Gastrocnemius medialis (tissue), 4 donors: ENCODE measurements at regions of chr5 and their contacts with region 1.

Region 1: DNA sequence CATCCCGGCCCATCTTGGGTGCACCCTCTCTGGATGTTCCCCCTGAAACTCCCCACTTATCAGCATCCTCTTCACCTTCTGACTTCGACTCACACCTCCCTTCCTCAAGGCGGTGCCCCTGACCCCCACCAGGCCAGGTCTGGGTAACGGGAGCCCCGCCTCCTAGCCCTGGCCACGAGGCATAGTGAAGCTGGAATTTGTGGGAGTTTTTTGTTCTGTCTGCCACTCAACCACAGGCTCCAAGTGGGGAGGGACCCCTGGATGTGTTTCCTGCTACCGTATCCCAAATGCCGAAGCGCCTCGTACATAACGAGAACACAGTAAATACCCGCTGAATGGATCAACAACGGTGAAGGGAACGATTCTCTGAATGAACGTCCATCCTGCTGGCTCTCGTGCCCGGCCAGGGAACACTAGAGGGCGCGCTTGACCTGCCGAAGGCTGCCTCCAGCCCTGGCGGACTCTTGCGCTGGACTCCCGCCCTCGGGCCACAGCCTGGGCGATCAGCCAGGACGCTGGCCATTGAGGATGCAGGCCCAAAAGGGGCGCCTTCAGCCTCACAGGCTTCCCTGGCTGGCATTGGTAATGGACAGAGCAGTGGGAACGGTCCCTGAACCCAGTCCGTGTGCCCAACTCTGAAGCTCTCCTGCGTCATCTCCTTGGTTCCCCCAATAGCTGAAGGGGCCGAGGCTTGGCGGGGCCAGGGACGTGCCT is 47.3 kb upstream of the PHYKPL start:
- DNase-seq: peak; percentile 65 to 74
- ATAC-seq: peak; percentile 78 to 91
- H3K4me3 ChIP-seq: no peak overlapping the region
- H3K27ac ChIP-seq: no peak overlapping the region
- H3K4me1 ChIP-seq: no peaks in the 10 kb centered on the region
- H3K27me3 ChIP-seq: no peaks in the 10 kb centered on the region
- CTCF ChIP-seq: peak; percentile 78 to 93 (median 91)
- POLR2A ChIP-seq: no peak

Region 2: GRCh38 chr5:178416919-178417318 is 137.0 kb after region 1 on chr5:
- in situ Hi-C with region 1: no loop called
- intact Hi-C with region 1: no loop called
- DNase-seq: no peak
- ATAC-seq: no peak
- H3K4me3 ChIP-seq: no peak overlapping the region
- H3K27ac ChIP-seq: no peak overlapping the region
- H3K4me1 ChIP-seq: no peaks in the 10 kb centered on the region
- H3K27me3 ChIP-seq: no peaks in the 10 kb centered on the region
- CTCF ChIP-seq: no peak
- POLR2A ChIP-seq: no peak

Region 3: DNA sequence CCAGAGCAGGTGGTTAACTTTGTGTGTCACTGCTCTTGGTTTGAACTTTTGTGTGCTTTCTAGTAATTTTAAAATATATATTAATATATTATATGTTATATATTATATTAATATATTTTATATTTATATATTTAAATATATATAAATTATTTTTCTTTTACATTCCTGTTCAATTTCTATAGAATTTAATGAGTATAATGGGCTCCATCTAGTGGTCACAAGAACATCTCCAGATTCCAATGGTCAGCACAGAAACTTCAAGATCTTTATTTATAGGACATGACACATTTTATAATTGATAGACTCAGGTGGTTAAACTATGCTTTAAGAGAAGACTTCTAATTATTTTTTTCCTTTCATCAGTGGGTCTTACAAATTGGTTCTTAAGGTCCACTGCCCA is 271.2 kb after region 1 on chr5:
- in situ Hi-C with region 1: loop called in 3 of 4 experiments (anchors 5 to 10 kb)
- intact Hi-C with region 1: loop called (anchors 1 kb)
- DNase-seq: no peak
- ATAC-seq: peak; percentile 72 to 83
- H3K4me3 ChIP-seq: no peak overlapping the region
- H3K27ac ChIP-seq: no peak overlapping the region
- H3K4me1 ChIP-seq: peaks cover 6 to 14% of the 10 kb centered on the region in 2 donors
- H3K27me3 ChIP-seq: no peaks in the 10 kb centered on the region
- CTCF ChIP-seq: peak in 3 of 5 experiments; percentile 29 to 64 (median 52)
- POLR2A ChIP-seq: no peak

Region 4: DNA sequence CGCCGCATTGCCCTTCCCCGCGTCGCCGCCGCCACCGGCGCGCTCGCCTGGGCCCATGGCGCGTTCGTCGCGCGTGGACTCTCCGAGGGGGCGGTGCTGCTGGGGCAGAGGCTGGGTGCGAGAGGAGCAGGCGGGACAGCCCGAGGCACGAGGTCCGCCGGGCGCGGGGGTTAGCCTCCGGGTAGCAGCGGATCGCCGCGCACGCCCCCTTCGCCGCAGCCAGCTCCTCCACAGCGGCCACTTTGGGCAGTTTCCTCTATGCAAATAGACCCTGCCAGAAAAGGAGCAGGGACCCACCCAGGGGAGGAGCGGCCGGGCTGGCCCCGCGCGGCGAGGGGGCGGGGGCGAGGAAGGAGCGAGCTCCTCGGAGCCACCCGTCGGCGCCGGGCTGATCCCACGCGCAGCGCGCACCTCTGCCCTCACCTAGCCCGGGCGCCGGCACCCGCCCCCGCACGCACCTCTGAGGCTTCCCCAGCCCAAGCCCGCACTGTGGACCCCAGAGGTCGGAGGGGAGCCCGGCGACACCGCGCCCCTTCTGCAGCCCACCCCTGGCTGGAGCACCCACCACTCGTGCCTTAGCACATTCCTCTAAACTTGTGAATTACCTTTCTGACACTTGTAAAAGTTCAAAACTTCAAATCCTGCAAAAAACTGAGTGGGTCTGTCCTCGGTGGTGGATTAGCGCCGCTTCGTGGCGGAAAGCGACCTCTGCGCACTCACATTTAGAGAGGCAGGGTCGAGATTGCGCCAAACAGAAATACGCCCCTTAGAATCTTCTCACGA is 310.4 kb after region 1 on chr5 and contains the start of gene COL23A1:
- in situ Hi-C with region 1: no loop called
- intact Hi-C with region 1: loop called (anchors 1 kb)
- DNase-seq: peak; percentile 43 to 53
- ATAC-seq: peak; percentile 65
- H3K4me3 ChIP-seq: peak within 1 kb of the TSS; percentile 53 to 65 (median 58)
- H3K27ac ChIP-seq: peak within 1 kb of the TSS; percentile 70 to 86 (median 78)
- H3K4me1 ChIP-seq: peaks cover 9 to 23% of the 10 kb centered on the region in 2 donors
- H3K27me3 ChIP-seq: peaks cover 0 to 2% (median 0%) of the 10 kb centered on the region in 3 donors
- CTCF ChIP-seq: peak; percentile 42 to 73 (median 64)
- POLR2A ChIP-seq: peak; percentile 16 to 18
- total RNA-seq, gene COL23A1: 0.62 to 1.1 (median 0.97) TPM in 3 of 4 donors, not detected in the other

Region 5: DNA sequence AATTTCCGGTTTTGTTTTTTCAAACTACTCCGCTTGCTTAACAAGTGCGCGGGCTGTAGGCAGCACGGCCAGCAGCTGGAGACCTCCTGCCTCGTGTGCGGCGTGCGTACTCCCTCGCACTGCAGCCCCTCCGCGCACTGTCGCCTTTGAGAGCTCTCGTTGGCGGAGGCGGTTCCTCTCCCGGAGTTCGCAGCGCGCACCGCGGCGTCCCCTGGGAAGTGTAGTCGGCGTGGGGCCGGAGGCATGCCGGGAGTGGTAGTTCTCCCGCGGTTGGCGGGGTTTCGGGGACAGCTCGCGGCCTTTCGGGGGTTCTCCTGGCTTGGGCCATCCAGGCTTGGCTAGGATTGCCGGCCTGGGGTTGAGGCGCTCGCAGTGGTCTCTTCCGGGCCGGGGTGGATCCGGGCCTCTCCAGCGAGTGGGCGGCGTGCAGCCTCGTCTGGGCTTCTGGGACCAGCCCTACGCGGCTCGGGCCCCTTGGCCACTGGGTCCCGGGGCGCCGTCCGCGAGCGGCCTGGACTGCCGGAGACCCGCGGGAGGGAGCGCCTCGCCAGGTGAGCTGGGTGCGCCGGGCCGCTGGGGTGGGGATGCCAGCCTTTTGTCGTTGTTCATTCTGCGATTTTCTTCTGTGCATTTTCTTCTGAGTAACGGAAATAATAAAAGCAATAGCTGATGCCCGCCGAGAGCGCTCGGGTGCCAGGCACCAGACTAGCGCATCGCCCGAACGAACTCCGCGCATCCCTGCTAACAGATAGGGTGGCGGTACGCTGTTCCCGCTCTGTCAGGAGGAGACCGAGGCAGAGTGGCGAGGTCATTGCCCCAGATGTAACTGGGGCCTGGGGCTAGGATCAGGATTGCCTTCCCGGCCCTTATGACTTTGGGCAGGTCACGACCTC is 780.5 kb after region 1 on chr5 and contains the start of gene ZNF354C:
- in situ Hi-C with region 1: no loop called
- intact Hi-C with region 1: loop called (anchors 1 kb)
- DNase-seq: peak; percentile 74 to 77
- ATAC-seq: peak; percentile 90 to 95
- H3K4me3 ChIP-seq: peak within 1 kb of the TSS; percentile 71 to 91 (median 84)
- H3K27ac ChIP-seq: peak within 1 kb of the TSS; percentile 63 to 76 (median 74)
- H3K4me1 ChIP-seq: peaks cover 5 to 7% of the 10 kb centered on the region in 2 donors
- H3K27me3 ChIP-seq: peaks cover 0 to 4% (median 0%) of the 10 kb centered on the region in 3 donors
- CTCF ChIP-seq: peak in 1 of 5 experiments; percentile 15
- POLR2A ChIP-seq: peak in 1 of 2 donors; percentile 48
- total RNA-seq, gene ZNF354C: 1.6 to 3.5 (median 2.3) TPM